Lower leg skin (tissue), 4 donors: ENCODE measurements at regions of chr5 and their contacts with region 1.

Region 1: GRCh38 chr5:111063700-111064322 is 7.7 kb upstream of the TSLP start:
- DNase-seq: no peak
- H3K4me3 ChIP-seq: no peak overlapping the region
- CTCF ChIP-seq: no peak
- POLR2A ChIP-seq: no peak

Region 2: DNA sequence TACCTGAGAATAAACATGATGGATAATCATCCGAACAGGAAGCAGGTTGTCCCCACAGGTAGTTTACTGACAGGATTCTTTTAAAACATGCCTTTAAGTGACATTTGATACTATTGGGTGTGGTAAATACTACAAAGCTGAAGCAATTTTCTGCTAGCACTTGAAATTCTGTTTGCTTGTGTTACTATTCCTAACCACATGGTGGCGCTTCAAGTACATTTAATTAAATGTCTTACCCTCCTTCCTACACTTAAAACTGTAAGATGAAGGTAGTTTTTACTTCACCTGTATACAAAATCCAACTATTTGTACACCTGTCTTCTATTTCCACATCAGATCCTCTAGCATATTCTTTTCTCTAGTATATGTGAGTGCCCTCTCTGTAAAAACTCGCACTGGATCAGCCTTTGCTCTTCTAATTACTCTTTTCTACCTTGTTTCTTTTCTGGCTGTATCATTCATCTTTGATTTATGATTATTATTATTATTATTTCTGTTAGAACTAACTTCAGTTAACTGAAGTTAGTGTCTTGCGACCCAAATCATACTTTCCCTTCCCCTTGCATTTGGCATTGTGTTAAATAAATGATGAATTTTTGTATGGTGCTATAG is 306.6 kb before region 1 on chr5:
- intact Hi-C with region 1: loop called (anchors 10 kb)
- DNase-seq: peak in 1 of 2 donors; percentile 18
- H3K4me3 ChIP-seq: no peak overlapping the region
- CTCF ChIP-seq: no peak
- POLR2A ChIP-seq: no peak

Region 3: DNA sequence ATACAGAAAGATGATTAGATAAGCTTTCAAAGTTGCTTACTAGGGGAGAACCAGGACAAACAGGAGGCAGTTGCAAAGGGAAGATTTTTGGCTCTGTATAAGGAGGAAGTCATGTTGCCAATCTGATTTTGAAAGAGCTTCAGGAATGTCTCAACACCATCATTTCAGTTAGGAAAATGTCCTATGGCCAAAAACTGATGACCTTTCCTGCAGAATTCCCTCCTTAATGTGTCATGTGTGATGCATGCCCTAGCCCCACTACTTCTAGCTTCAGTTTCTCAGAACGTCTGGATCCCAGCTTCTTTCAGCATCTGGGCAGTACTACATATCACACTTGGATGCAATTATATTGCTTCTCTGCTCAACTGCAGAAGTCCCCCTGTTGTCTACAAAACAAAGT is 904.6 kb after region 1 on chr5:
- intact Hi-C with region 1: no loop called
- DNase-seq: peak in 1 of 2 donors; percentile 31
- H3K4me3 ChIP-seq: no peak overlapping the region
- CTCF ChIP-seq: no peak
- POLR2A ChIP-seq: no peak